Vagina (tissue), 2 donors: ENCODE measurements at regions of chr9 and their contacts with region 1.

Region 1: DNA sequence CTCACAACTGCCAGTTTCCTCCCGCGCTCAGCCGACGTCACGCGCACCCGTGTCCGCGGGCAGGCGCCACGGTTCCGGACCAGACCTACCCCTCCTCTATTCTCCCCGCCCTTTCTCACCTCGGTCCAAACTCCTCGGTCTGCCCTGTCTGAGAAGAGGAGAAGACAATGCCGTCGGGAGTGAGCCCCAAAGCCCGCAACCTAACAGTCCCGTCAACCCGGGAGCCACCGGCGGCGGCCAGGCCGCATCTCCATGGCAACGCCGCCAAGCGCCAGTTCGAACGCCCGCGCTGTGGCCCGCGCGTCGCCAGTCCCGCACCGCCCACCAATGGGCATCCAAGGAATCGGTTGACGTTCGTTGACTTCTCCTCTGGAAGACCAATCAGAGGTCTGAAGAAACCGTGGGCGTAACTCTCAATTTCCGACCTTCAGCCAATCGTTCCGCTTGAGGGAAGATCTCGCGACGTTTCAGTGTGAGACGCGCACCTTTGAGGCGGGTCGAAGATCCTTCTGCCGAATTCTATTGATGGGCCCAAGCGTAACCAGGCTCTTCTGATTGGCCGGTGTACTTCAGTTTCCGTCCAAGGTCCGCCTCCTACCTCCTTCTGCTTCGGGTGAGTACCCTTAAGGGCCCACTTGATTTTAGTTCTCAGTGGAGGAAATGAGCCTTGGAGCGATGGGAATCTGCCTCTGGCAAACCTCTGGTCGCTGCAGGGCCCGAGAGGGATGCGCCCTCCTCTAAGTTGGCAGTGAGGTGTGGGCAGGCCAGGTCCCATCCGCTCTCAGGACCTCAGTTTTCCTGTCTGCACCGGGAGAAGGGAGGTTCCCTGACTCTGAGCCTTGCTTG is at the starts of genes KIF24 and NUDT2:
- DNase-seq: peak; percentile 99 to 100
- H3K4me3 ChIP-seq: peak within 1 kb of the TSS; percentile 58 to 88
- H3K27ac ChIP-seq: peak within 1 kb of the TSS; percentile 83
- H3K4me1 ChIP-seq: peaks cover 29% of the 10 kb centered on the region
- H3K27me3 ChIP-seq: no peaks in the 10 kb centered on the region
- CTCF ChIP-seq: no peak
- POLR2A ChIP-seq: peak in 1 of 2 donors; percentile 54
- total RNA-seq, gene KIF24: 0.49 TPM
- total RNA-seq, gene NUDT2: 18.4 TPM

Region 2: DNA sequence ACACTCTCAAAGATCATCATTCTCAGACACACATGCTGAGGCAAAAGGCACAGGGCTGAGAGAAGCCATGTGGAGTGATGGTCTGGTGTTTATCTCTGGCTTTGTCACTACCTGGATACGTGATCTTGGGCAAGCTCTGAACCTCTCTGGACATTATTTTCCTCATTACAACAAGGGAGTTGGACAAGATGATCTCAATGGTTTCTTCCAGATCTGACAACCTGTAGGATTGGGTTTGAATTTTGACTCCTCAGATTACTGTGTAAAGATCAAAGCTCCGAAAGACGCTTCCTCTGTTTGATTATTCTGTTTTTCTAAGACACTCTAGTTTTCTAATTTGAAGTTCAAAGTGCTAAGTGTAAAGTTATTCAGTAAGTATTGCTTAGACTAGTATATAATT is 20.1 kb after region 1 on chr9:
- intact Hi-C with region 1: no loop called
- DNase-seq: no peak
- H3K4me3 ChIP-seq: no peak overlapping the region
- H3K27ac ChIP-seq: no peak overlapping the region
- H3K4me1 ChIP-seq: no peaks in the 10 kb centered on the region
- H3K27me3 ChIP-seq: no peaks in the 10 kb centered on the region
- CTCF ChIP-seq: no peak
- POLR2A ChIP-seq: no peak

Region 3: DNA sequence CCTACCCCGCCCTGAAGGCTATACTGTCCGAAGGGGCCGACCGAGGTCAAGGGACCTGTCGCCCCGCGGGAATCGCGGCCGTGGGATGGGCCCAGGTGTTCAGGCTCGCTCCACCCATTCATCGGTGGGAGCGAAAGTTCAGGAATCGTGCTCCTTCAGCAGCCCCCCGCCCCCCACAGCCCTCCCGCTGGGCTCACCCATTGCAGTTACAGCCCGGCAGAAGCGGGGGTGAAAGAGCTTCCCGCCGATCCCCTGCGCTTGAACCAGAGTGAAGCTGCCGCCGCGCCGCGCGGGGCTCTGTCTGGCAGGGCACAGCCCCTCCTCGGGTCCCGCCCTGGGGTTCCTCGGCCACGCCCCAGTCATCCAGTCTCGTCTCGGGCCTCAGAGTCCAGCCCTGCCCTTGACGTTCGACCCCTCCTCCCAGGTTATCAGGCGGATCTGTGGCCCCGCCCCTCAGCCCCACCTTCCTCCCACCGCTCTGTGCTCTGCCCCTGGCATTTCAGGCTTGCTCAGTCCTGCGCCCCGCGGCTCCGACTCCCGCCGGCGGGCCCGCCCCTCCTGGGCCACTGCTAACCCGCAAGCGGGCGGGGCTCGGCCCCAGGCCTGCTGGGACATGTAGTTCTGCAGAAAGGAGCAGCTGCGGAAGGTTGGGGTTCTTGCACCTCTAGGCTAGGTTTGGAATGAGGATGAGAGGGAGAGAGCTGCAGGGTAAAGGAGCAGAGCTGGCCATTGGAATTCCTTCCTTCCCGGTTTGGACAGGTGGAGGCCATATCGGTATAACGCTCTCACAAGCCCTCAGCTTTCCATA is 47.6 kb after region 1 on chr9 and contains the start of gene MYORG:
- intact Hi-C with region 1: loop called (anchors 2 kb)
- DNase-seq: peak; percentile 95 to 97
- H3K4me3 ChIP-seq: peak within 1 kb of the TSS; percentile 57 to 70
- H3K27ac ChIP-seq: peak within 1 kb of the TSS; percentile 78
- H3K4me1 ChIP-seq: peaks cover 47% of the 10 kb centered on the region
- H3K27me3 ChIP-seq: no peaks in the 10 kb centered on the region
- CTCF ChIP-seq: no peak
- POLR2A ChIP-seq: peak in 1 of 2 donors; percentile 47
- total RNA-seq, gene MYORG: 4.4 TPM